B cell (primary cell): ENCODE measurements at regions of chr4 and their contacts with region 1.

Region 1: DNA sequence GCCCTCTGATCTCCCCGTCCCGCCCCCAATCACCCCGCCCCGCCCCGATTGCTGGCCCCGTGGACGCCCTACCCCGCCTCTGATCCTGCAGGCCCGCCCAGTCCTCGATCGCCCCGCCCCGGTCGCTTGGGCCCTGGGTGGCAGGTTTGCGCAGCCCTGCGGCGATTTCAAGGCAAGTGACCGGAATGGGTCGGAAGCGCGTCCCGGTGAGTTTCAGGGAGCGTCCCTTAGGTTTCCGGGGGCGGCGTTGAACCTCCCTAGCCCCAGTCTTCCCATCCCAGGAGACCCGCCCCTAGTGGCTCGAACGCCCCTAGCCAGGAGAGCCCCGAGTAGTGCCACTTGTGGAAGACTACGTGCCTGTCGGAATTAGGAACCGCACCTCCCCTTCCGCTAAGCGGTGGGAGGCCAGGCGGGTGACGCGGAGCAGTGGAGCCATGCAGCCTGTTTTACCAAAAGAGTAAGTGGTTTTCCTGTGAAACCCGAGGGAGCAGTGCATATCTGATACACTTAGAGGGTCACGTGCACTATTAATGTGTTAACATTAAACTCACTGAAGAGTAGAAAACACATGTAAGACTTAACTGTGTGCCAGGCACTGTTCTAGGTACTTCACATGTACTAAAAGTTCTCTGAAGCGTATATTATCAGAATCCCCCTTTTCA is 354 bp upstream of the TEC start:
- DNase-seq: peak; percentile 94
- ATAC-seq: peak; percentile 91
- H3K4me3 ChIP-seq: peak overlapping the region in 4 of 5 experiments; percentile 72 to 98 (median 85)
- H3K4me3 Mint-ChIP-seq: peak overlapping the region; percentile 99
- H3K27ac ChIP-seq: peak overlapping the region; percentile 77 to 79
- H3K27ac Mint-ChIP-seq: peak overlapping the region; percentile 98
- H3K4me1 ChIP-seq: peaks cover 11 to 16% of the 10 kb centered on the region in 2 donors
- H3K4me1 Mint-ChIP-seq: peaks cover 29% of the 10 kb centered on the region
- H3K27me3 ChIP-seq: no peaks in the 10 kb centered on the region
- H3K27me3 Mint-ChIP-seq: no peaks in the 10 kb centered on the region
- CTCF ChIP-seq: peak; percentile 23

Region 2: GRCh38 chr4:47907089-47907646 is 362.8 kb before region 1 on chr4:
- CTCF ChIA-PET with region 1: no interaction called
- POLR2A ChIA-PET with region 1: no interaction called
- intact Hi-C with region 1: no loop called
- DNase-seq: no peak
- ATAC-seq: no peak
- H3K4me3 ChIP-seq: no peak overlapping the region
- H3K4me3 Mint-ChIP-seq: no peak overlapping the region
- H3K27ac ChIP-seq: no peak overlapping the region
- H3K27ac Mint-ChIP-seq: no peak overlapping the region
- H3K4me1 ChIP-seq: no peaks in the 10 kb centered on the region
- H3K4me1 Mint-ChIP-seq: peaks cover 10% of the 10 kb centered on the region
- H3K27me3 ChIP-seq: no peaks in the 10 kb centered on the region
- H3K27me3 Mint-ChIP-seq: no peaks in the 10 kb centered on the region
- CTCF ChIP-seq: no peak

Region 3: DNA sequence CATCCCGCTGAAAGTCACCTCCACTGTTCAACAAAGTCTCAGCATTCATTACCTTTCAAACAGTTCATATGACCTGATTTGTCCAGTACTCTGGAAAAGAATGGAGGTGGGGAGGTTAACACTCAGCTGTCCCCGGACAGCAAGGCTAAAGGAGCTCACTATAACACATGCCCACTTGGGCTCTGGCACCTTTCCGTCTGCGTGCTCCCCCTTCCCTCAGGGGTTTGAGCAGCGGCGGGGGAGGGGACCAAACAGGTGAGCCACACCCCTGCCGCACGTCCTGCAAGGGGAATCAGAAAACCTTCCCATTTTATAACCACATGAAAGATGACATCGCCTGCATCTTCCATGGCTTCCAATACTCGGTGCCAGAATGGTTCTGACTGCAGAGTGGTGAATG is 315.7 kb before region 1 on chr4:
- CTCF ChIA-PET with region 1: no interaction called
- POLR2A ChIA-PET with region 1: no interaction called
- intact Hi-C with region 1: no loop called
- DNase-seq: no peak
- ATAC-seq: no peak
- H3K4me3 ChIP-seq: no peak overlapping the region
- H3K4me3 Mint-ChIP-seq: no peak overlapping the region
- H3K27ac ChIP-seq: no peak overlapping the region
- H3K27ac Mint-ChIP-seq: no peak overlapping the region
- H3K4me1 ChIP-seq: no peaks in the 10 kb centered on the region
- H3K4me1 Mint-ChIP-seq: no peaks in the 10 kb centered on the region
- H3K27me3 ChIP-seq: peaks cover 0 to 3% (median 0%) of the 10 kb centered on the region in 4 experiments
- H3K27me3 Mint-ChIP-seq: peaks cover 6% of the 10 kb centered on the region
- CTCF ChIP-seq: no peak

Region 4: GRCh38 chr4:48016141-48017103 is 253.6 kb before region 1 on chr4 and contains the starts of genes CNGA1 and NIPAL1:
- CTCF ChIA-PET with region 1: no interaction called
- POLR2A ChIA-PET with region 1: no interaction called
- intact Hi-C with region 1: loop called (anchors 1 kb)
- DNase-seq: peak; percentile 71
- ATAC-seq: peak; percentile 92
- H3K4me3 ChIP-seq: peak within 1 kb of the TSS; percentile 41 to 80 (median 66)
- H3K4me3 Mint-ChIP-seq: peak within 1 kb of the TSS; percentile 89
- H3K27ac ChIP-seq: no peak within 1 kb of the TSS
- H3K27ac Mint-ChIP-seq: peak within 1 kb of the TSS; percentile 50
- H3K4me1 ChIP-seq: peaks cover 15 to 18% of the 10 kb centered on the region in 2 donors
- H3K4me1 Mint-ChIP-seq: peaks cover 15% of the 10 kb centered on the region
- H3K27me3 ChIP-seq: peaks cover 2 to 49% (median 28%) of the 10 kb centered on the region in 4 experiments
- H3K27me3 Mint-ChIP-seq: peaks cover 45% of the 10 kb centered on the region
- CTCF ChIP-seq: peak; percentile 15
- total RNA-seq, gene CNGA1: not detected in 2 replicates
- total RNA-seq, gene NIPAL1: 1.1 TPM in 1 of 2 replicates, not detected in the other

Region 5: GRCh38 chr4:48141048-48141447 is 128.9 kb before region 1 on chr4:
- CTCF ChIA-PET with region 1: interaction called, 7 read pairs
- POLR2A ChIA-PET with region 1: interaction called, 6 read pairs
- intact Hi-C with region 1: loop called (anchors 5 kb)
- DNase-seq: peak; percentile 53
- ATAC-seq: peak; percentile 37
- H3K4me3 ChIP-seq: no peak overlapping the region
- H3K4me3 Mint-ChIP-seq: no peak overlapping the region
- H3K27ac ChIP-seq: no peak overlapping the region
- H3K27ac Mint-ChIP-seq: no peak overlapping the region
- H3K4me1 ChIP-seq: peaks cover 27 to 31% of the 10 kb centered on the region in 2 donors
- H3K4me1 Mint-ChIP-seq: peaks cover 34% of the 10 kb centered on the region
- H3K27me3 ChIP-seq: no peaks in the 10 kb centered on the region
- H3K27me3 Mint-ChIP-seq: no peaks in the 10 kb centered on the region
- CTCF ChIP-seq: peak; percentile 84

Region 6: GRCh38 chr4:48212165-48212564 is 57.8 kb before region 1 on chr4:
- CTCF ChIA-PET with region 1: no interaction called
- POLR2A ChIA-PET with region 1: no interaction called
- intact Hi-C with region 1: loop called (anchors 2 kb)
- DNase-seq: peak; percentile 65
- ATAC-seq: peak; percentile 79
- H3K4me3 ChIP-seq: peak overlapping the region in 4 of 5 experiments; percentile 7 to 35 (median 20)
- H3K4me3 Mint-ChIP-seq: peak overlapping the region; percentile 79
- H3K27ac ChIP-seq: peak overlapping the region; percentile 41 to 79
- H3K27ac Mint-ChIP-seq: peak overlapping the region; percentile 74
- H3K4me1 ChIP-seq: peaks cover 26 to 27% of the 10 kb centered on the region in 2 donors
- H3K4me1 Mint-ChIP-seq: peaks cover 33% of the 10 kb centered on the region
- H3K27me3 ChIP-seq: no peaks in the 10 kb centered on the region
- H3K27me3 Mint-ChIP-seq: no peaks in the 10 kb centered on the region
- CTCF ChIP-seq: no peak

Region 7: DNA sequence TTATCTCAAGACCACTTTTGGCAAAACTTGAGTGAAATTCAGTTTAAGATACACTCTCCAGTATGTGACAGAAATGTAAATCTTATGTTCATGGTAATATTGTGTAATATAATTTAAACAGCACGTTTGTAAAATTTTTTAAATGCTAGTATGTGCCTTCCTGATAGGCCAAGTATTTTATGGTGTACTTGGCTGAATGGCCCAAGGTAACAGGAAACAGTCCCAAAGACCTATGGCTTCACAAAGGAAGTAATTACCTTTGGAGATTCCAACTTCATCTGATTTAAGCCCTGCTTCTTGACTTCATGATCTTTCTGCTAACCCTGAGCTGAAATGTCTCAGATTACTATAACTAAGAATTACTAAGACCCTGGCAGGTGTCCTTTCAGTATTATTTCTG is 20.6 kb before region 1 on chr4:
- CTCF ChIA-PET with region 1: no interaction called
- POLR2A ChIA-PET with region 1: no interaction called
- intact Hi-C with region 1: no loop called
- DNase-seq: no peak
- ATAC-seq: no peak
- H3K4me3 ChIP-seq: no peak overlapping the region
- H3K4me3 Mint-ChIP-seq: no peak overlapping the region
- H3K27ac ChIP-seq: no peak overlapping the region
- H3K27ac Mint-ChIP-seq: no peak overlapping the region
- H3K4me1 ChIP-seq: no peaks in the 10 kb centered on the region
- H3K4me1 Mint-ChIP-seq: peaks cover 19% of the 10 kb centered on the region
- H3K27me3 ChIP-seq: no peaks in the 10 kb centered on the region
- H3K27me3 Mint-ChIP-seq: no peaks in the 10 kb centered on the region
- CTCF ChIP-seq: no peak

Region 8: DNA sequence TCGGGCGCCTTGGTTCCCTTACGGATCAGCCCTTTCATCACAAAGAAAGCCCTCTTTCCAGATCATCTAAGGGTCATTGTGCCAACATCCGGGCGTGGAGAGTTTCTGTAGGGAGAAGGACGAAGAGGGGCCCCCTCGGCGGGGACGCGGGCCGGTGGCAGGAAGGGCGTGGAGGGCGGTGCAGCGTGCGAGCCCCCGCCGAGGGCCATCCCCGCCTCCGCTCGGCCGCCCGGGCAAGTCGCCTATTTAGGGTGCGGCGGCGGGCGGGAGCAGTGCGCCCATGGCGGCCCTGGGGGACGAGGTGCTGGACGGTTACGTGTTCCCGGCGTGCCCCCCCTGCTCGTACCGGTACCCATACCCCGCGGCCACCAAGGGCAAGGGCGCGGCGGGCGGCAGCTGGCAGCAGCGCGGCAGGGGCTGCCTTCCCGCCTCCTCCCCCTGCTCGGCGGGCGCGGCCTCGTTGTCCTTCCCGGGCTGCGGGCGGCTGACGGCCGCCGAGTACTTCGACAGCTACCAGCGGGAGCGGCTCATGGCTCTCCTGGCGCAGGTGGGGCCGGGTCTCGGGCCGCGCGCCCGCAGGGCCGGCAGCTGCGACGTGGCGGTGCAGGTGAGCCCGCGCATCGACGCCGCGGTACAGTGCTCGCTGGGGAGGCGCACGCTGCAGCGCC is 220.2 kb after region 1 on chr4 and contains the start of gene ZAR1:
- CTCF ChIA-PET with region 1: no interaction called
- POLR2A ChIA-PET with region 1: no interaction called
- intact Hi-C with region 1: no loop called
- DNase-seq: peak; percentile 43
- ATAC-seq: peak; percentile 36
- H3K4me3 ChIP-seq: peak within 1 kb of the TSS in 2 of 5 experiments; percentile 29 to 39
- H3K4me3 Mint-ChIP-seq: peak within 1 kb of the TSS; percentile 80
- H3K27ac ChIP-seq: no peak within 1 kb of the TSS
- H3K27ac Mint-ChIP-seq: no peak within 1 kb of the TSS
- H3K4me1 ChIP-seq: peaks cover 9 to 11% of the 10 kb centered on the region in 2 donors
- H3K4me1 Mint-ChIP-seq: peaks cover 4% of the 10 kb centered on the region
- H3K27me3 ChIP-seq: peaks cover 0 to 24% (median 17%) of the 10 kb centered on the region in 4 experiments
- H3K27me3 Mint-ChIP-seq: peaks cover 40% of the 10 kb centered on the region
- CTCF ChIP-seq: no peak
- total RNA-seq, gene ZAR1: not detected in 2 replicates